ENCODE measurements at regions of chr3 and their contacts with region 1.

Region 1: DNA sequence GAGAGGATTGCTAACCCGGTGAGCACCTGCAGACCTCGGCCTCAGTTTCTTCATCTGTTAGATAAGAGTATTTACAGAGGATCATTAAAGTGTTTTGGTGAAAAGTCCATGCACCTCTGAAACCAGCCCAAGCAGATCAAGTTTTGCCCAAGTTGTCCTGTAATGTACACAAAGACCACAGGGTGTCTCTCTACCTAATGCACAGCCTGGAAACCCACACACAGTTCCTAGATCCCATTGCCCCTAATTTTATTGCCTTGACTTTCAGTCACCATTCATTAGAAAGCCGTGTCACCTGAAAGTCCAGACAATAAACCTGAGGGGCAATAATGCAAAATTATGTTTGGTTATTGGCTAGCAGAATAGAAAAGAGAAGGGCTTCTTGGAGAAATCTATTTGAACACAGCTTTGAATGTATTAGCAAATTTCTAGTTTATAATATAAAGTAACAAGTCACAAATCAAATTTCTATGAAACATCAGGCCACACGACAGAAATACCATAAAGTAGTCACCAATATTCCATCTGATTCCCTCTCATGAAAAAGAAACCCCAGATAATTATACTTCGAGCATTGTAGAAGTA is 161.3 kb upstream of the SLC2A2 start:
- DNase-seq: peak; percentile 35
- H3K4me3 Mint-ChIP-seq: no peak overlapping the region
- H3K27ac Mint-ChIP-seq: no peak overlapping the region
- H3K4me1 Mint-ChIP-seq: peaks cover 49% of the 10 kb centered on the region
- H3K27me3 Mint-ChIP-seq: no peaks in the 10 kb centered on the region

Region 2: DNA sequence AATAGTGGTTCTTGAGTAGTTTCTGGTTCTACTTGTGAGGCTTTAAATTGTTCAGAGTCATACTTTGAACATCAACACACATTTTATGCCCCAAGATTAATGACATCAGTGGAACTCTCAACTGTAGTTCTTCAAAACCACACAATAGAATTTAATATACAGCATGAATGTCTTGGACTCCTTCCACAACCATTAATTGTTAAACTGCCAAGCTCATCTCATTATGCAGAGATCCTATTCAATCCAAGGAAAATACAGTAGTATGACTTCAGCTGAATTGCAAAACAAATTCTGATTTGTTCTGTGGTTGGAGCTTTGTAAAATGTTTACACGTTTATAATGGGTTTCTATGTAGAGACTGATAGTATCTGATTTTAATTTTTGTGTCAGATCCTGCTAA is 37.9 kb after region 1 on chr3:
- CTCF ChIA-PET with region 1: no interaction called
- intact Hi-C with region 1: loop called (anchors 1 kb)
- DNase-seq: no peak
- H3K4me3 Mint-ChIP-seq: no peak overlapping the region
- H3K27ac Mint-ChIP-seq: peak overlapping the region; percentile 56
- H3K4me1 Mint-ChIP-seq: peaks cover 50% of the 10 kb centered on the region
- H3K27me3 Mint-ChIP-seq: no peaks in the 10 kb centered on the region

Region 3: GRCh38 chr3:171255236-171255806 is 67.5 kb after region 1 on chr3:
- CTCF ChIA-PET with region 1: interaction called, 3 read pairs
- intact Hi-C with region 1: loop called (anchors 1 kb)
- DNase-seq: no peak
- H3K4me3 Mint-ChIP-seq: no peak overlapping the region
- H3K27ac Mint-ChIP-seq: peak overlapping the region; percentile 78
- H3K4me1 Mint-ChIP-seq: peaks cover 86% of the 10 kb centered on the region
- H3K27me3 Mint-ChIP-seq: no peaks in the 10 kb centered on the region

Region 4: GRCh38 chr3:171351676-171352075 is 163.9 kb after region 1 on chr3:
- CTCF ChIA-PET with region 1: no interaction called
- intact Hi-C with region 1: no loop called
- DNase-seq: no peak
- H3K4me3 Mint-ChIP-seq: no peak overlapping the region
- H3K27ac Mint-ChIP-seq: no peak overlapping the region
- H3K4me1 Mint-ChIP-seq: peaks cover 81% of the 10 kb centered on the region
- H3K27me3 Mint-ChIP-seq: no peaks in the 10 kb centered on the region

Region 5: DNA sequence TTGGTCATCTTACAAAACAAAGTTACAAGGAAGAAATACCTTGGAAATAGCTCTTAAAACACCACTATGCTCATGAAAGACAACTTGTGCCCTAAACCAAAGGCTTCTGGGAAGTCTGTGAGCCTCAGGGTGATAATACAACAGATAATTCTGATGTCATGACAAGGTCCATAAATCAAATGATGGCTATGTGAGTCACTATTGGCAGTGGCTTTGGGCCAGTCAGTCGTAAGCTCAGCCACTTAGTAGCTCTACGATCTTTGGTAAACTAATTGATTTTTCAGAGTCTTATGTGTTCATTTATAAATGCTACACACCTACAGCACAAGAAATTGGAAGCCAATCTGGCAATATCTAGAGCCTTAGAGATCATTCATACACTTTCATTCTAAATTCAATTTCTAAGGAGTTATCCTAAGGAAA is 259.6 kb after region 1 on chr3:
- CTCF ChIA-PET with region 1: no interaction called
- intact Hi-C with region 1: no loop called
- DNase-seq: no peak
- H3K4me3 Mint-ChIP-seq: no peak overlapping the region
- H3K27ac Mint-ChIP-seq: no peak overlapping the region
- H3K4me1 Mint-ChIP-seq: peaks cover 46% of the 10 kb centered on the region
- H3K27me3 Mint-ChIP-seq: no peaks in the 10 kb centered on the region